Breast epithelium (tissue), 4 donors: ENCODE measurements at regions of chr3 and their contacts with region 1.

Region 1: GRCh38 chr3:196192036-196192523 is 19.1 kb downstream of the ZDHHC19 start:
- DNase-seq: no peak
- H3K4me3 ChIP-seq: no peak overlapping the region
- H3K27ac ChIP-seq: peak overlapping the region; percentile 40 to 54
- H3K4me1 ChIP-seq: no peaks in the 10 kb centered on the region
- H3K27me3 ChIP-seq: no peaks in the 10 kb centered on the region
- CTCF ChIP-seq: no peak
- POLR2A ChIP-seq: no peak

Region 2: GRCh38 chr3:194212845-194213320 is 1979.2 kb before region 1 on chr3:
- intact Hi-C with region 1: no loop called
- DNase-seq: peak; percentile 58 to 79
- H3K4me3 ChIP-seq: no peak overlapping the region
- H3K27ac ChIP-seq: peak overlapping the region; percentile 20 to 54
- H3K4me1 ChIP-seq: no peaks in the 10 kb centered on the region
- H3K27me3 ChIP-seq: no peaks in the 10 kb centered on the region
- CTCF ChIP-seq: no peak
- POLR2A ChIP-seq: no peak

Region 3: DNA sequence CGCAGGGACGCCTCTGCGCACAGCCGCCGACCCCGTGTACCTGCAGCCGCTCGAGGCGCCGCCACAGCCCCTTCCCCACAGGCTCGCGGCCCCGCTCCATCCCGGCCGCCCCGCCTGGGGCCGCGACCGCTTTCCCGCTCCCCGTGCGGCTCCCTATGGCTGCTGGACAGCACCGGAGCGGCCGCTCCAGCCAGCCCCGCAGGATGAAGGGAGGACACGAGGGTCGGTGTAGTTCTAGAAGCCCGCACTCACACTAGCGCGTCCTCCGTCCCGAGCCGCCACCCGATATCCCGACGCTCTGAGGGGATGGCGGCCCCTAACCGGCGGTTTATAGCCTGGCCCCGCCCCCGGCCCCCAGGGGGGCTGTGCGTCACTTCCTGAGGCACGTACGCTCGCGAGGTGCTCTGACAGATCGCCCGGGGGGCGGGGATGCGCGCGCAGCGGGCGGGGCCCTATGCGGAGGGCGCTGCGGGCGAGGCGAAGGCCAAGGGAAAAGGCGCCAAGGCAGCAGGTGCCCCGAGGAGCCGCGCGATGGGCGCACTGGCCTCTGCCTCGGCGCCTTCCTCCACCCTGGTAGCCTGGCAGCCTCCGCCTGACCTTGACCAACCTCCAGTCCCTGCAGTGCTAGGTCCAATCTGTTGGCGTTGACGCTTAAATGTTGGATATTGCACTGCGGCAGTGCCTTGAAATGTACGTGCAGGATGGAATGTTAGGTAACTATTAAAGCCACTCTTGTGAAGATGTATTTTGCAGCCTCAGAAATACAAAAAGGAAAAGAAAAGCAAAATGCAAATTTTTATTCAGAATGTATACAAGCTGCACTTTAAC is 110.1 kb before region 1 on chr3 and contains the start of gene TFRC:
- intact Hi-C with region 1: loop called (anchors 5 kb)
- DNase-seq: peak; percentile 87 to 88
- H3K4me3 ChIP-seq: peak within 1 kb of the TSS; percentile 78 to 98 (median 95)
- H3K27ac ChIP-seq: peak within 1 kb of the TSS; percentile 90 to 91
- H3K4me1 ChIP-seq: peaks cover 0 to 10% of the 10 kb centered on the region in 2 donors
- H3K27me3 ChIP-seq: no peaks in the 10 kb centered on the region
- CTCF ChIP-seq: no peak
- POLR2A ChIP-seq: peak; percentile 74
- total RNA-seq, gene TFRC: 57.6 to 116 (median 80.3) TPM

Region 4: GRCh38 chr3:196813903-196814302 is 621.8 kb after region 1 on chr3:
- intact Hi-C with region 1: no loop called
- DNase-seq: no peak
- H3K4me3 ChIP-seq: no peak overlapping the region
- H3K27ac ChIP-seq: no peak overlapping the region
- H3K4me1 ChIP-seq: no peaks in the 10 kb centered on the region
- H3K27me3 ChIP-seq: no peaks in the 10 kb centered on the region
- CTCF ChIP-seq: no peak
- POLR2A ChIP-seq: no peak